Posterior vena cava (tissue), 2 donors: ENCODE measurements at regions of chr2 and their contacts with region 1.

Region 1: GRCh38 chr2:138275881-138276280 is 225.7 kb upstream of the SPOPL start:
- DNase-seq: no peak

Region 2: GRCh38 chr2:136482966-136483365 is 1792.9 kb before region 1 on chr2:
- intact Hi-C with region 1: loop called in 1 of 2 experiments (anchors 5 kb)
- DNase-seq: no peak